Esophagus muscularis mucosa (tissue), 4 donors: ENCODE measurements at regions of chr1 and their contacts with region 1.

Region 1: GRCh38 chr1:179175011-179175841 is 54.3 kb downstream of the ABL2 start:
- DNase-seq: no peak
- H3K4me3 ChIP-seq: no peak overlapping the region
- H3K27ac ChIP-seq: peak overlapping the region; percentile 60 to 76 (median 70)
- H3K4me1 ChIP-seq: peaks cover 32 to 61% (median 54%) of the 10 kb centered on the region in 4 donors
- H3K27me3 ChIP-seq: no peaks in the 10 kb centered on the region
- CTCF ChIP-seq: no peak
- EP300 ChIP-seq: no peak
- POLR2A ChIP-seq: no peak

Region 2: DNA sequence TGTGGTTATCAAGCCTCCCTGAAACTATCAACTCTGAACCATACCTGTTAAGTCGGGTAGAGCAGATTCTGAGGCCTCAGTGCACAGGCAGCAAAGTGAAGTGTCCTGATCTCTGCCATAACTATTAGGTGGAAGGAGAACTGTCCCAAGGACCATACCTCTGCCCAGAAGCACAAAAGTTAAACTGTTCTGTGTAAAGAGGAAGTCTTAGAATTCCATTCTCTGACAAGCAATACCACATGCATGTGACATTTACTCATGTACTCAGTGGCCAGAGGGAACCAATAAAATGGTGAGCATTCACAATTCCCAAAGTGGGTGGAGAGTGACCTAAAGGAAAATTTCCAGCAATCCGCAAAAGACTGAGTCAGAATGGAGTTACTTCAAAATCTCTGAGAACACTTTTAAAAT is 32.3 kb before region 1 on chr1:
- intact Hi-C with region 1: loop called (anchors 5 kb)
- DNase-seq: no peak
- H3K4me3 ChIP-seq: peak overlapping the region; percentile 23 to 44 (median 32)
- H3K27ac ChIP-seq: peak overlapping the region; percentile 55 to 70 (median 63)
- H3K4me1 ChIP-seq: peaks cover 0 to 51% (median 27%) of the 10 kb centered on the region in 4 donors
- H3K27me3 ChIP-seq: no peaks in the 10 kb centered on the region
- CTCF ChIP-seq: no peak
- EP300 ChIP-seq: no peak
- POLR2A ChIP-seq: no peak